Posterior vena cava (tissue), 2 donors: ENCODE measurements at regions of chr20 and their contacts with region 1.

Region 1: GRCh38 chr20:45647441-45648050 is 16.5 kb upstream of the WFDC9 start:
- DNase-seq: no peak

Region 2: DNA sequence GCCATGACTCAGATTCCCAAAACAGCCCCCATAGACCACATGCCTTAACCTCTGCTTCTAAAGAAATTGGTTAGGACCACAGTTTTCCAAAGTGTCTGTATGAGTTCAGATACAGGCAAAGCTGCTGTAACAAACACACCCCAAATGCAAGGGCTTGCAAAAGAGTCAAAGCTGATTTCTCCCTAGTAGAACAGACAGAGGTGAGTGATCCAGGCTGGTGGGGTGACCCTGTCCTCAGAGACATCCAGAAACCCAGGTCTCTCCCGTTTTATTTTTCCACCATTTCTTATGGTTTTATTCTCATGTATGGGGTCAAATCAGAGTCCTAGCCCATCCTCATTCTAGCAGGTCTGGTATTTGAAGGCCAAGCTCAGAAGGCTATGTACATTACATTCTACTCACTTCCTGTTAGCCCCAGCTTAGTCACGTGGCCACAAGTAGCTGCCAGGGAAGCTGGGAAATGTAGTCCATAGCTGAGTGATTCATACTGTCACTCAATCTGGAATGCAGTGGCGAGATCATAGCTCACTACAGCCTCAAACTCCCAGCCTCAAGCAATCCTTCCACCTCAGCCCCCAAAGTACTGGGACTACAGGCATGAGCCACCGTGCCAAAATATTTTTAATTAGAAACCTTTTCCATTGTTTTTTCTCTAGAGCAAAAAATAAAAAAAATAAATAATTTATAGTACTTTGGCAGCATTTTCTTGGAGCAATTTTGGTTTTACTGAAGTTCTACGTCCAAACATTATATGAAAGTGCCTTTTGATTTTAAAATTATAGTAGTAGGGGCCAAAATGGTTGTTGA is 1533.7 kb after region 1 on chr20:
- intact Hi-C with region 1: loop called in 1 of 2 experiments (anchors 10 kb)
- DNase-seq: peak; percentile 66